ENCODE measurements at regions of chr12 and their contacts with region 1.

Region 1: GRCh38 chr12:53145383-53146260 is 34.9 kb upstream of the ZNF740 start:
- DNase-seq: peak in 3 of 6 donors; percentile 16 to 36 (median 33)
- ATAC-seq: peak; percentile 72 to 89 (median 76)
- H3K4me3 ChIP-seq: no peak overlapping the region
- H3K27ac ChIP-seq: no peak overlapping the region
- H3K4me1 ChIP-seq: peaks cover 0 to 2% (median 0%) of the 10 kb centered on the region in 3 donors
- H3K27me3 ChIP-seq: no peaks in the 10 kb centered on the region
- CTCF ChIP-seq: no peak

Region 2: DNA sequence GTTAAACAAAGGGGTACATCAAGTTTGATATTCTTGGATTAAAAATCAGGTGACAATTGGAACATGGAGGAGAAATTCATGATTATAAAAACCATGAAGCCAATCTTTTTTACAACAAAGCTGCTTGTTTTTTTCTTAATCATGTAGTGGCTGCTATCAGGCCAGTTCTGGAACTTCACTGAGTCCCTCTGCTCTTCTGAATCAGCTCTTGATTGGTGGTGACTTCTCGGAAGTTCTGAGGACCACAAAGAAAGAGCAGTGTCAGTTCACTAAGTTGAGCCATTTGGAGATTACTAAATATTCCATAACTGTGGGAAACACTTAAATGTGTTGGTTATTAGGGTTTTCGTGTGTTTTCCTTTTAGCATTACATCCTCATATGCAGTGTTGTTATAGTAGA is 130.9 kb before region 1 on chr12:
- intact Hi-C with region 1: no loop called
- DNase-seq: no peak
- ATAC-seq: no peak
- H3K4me3 ChIP-seq: no peak overlapping the region
- H3K27ac ChIP-seq: no peak overlapping the region
- H3K4me1 ChIP-seq: peaks cover 10 to 18% (median 14%) of the 10 kb centered on the region in 3 donors
- H3K27me3 ChIP-seq: no peaks in the 10 kb centered on the region
- CTCF ChIP-seq: no peak

Region 3: GRCh38 chr12:53190108-53190729 is 44.6 kb after region 1 on chr12:
- intact Hi-C with region 1: loop called in 1 of 3 experiments (anchors 10 kb)
- DNase-seq: peak in 4 of 6 donors; percentile 56 to 76 (median 71)
- ATAC-seq: peak; percentile 72 to 90 (median 88)
- H3K4me3 ChIP-seq: no peak overlapping the region
- H3K27ac ChIP-seq: no peak overlapping the region
- H3K4me1 ChIP-seq: no peaks in the 10 kb centered on the region
- H3K27me3 ChIP-seq: no peaks in the 10 kb centered on the region
- CTCF ChIP-seq: peak; percentile 48 to 64 (median 52)

Region 4: DNA sequence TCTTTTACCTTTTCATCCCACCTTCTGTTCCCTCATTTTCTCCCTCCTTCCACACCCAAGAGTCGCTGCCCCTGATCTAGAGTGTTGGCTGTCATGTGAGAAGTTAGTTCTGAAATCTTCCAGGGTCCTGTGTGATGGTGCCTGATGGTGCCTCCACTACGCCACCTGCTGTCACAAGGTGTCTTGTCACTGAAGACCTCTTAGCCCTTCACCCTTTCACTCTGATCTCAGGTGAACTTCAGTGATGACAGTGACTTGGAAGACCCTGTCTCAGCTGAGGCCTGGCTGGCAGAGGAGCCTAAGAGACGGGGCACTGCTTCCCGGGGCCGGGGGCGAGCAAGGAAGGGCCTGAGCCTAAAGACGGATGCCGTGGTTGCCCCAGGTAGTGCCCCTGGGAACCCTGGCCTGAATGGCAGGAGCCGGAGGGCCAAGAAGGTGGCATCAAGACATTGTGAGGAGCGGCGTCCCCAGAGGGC is 142.2 kb after region 1 on chr12:
- intact Hi-C with region 1: no loop called
- DNase-seq: peak in 5 of 6 donors; percentile 52 to 73 (median 62)
- ATAC-seq: peak; percentile 70 to 93 (median 88)
- H3K4me3 ChIP-seq: no peak overlapping the region
- H3K27ac ChIP-seq: no peak overlapping the region
- H3K4me1 ChIP-seq: no peaks in the 10 kb centered on the region
- H3K27me3 ChIP-seq: no peaks in the 10 kb centered on the region
- CTCF ChIP-seq: peak; percentile 33 to 52 (median 44)